ENCODE measurements at regions of chr2 and their contacts with region 1.

Region 1: GRCh38 chr2:8303322-8303832 is 378.5 kb upstream of the ID2 start:
- DNase-seq: peak; percentile 94
- H3K4me3 Mint-ChIP-seq: peak overlapping the region; percentile 71
- H3K27ac Mint-ChIP-seq: peak overlapping the region; percentile 83
- H3K4me1 Mint-ChIP-seq: peaks cover 72% of the 10 kb centered on the region
- H3K27me3 Mint-ChIP-seq: no peaks in the 10 kb centered on the region

Region 2: DNA sequence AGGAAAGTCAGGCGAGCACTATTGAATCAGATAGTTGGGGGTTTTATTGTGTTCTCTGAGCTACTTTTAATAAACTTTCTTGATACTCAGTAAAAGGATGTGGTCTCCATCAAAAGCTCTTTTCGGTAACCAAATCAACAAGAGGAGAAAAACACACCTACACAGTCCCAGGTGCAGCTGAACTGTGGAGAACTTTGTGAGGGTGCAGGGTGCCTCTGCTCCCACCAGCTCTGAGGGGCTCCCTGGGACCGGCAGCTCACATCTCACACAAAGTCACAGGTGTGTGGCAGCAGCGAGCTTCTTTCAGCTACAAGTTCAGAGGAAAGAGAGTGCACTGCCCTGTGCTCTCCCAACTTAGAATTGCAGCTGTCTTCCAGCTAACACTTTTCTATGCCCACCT is 735.7 kb before region 1 on chr2:
- intact Hi-C with region 1: loop called (anchors 5 kb)
- DNase-seq: peak; percentile 89
- H3K4me3 Mint-ChIP-seq: peak overlapping the region; percentile 65
- H3K27ac Mint-ChIP-seq: peak overlapping the region; percentile 97
- H3K4me1 Mint-ChIP-seq: peaks cover 58% of the 10 kb centered on the region
- H3K27me3 Mint-ChIP-seq: no peaks in the 10 kb centered on the region

Region 3: GRCh38 chr2:8049851-8050571 is 253.4 kb before region 1 on chr2:
- intact Hi-C with region 1: loop called (anchors 2 kb)
- DNase-seq: peak; percentile 81
- H3K4me3 Mint-ChIP-seq: peak overlapping the region; percentile 7
- H3K27ac Mint-ChIP-seq: peak overlapping the region; percentile 84
- H3K4me1 Mint-ChIP-seq: peaks cover 23% of the 10 kb centered on the region
- H3K27me3 Mint-ChIP-seq: no peaks in the 10 kb centered on the region

Region 4: GRCh38 chr2:8234757-8235374 is 68.5 kb before region 1 on chr2:
- intact Hi-C with region 1: loop called (anchors 1 kb)
- DNase-seq: no peak
- H3K4me3 Mint-ChIP-seq: no peak overlapping the region
- H3K27ac Mint-ChIP-seq: no peak overlapping the region
- H3K4me1 Mint-ChIP-seq: peaks cover 22% of the 10 kb centered on the region
- H3K27me3 Mint-ChIP-seq: peaks cover 1% of the 10 kb centered on the region

Region 5: DNA sequence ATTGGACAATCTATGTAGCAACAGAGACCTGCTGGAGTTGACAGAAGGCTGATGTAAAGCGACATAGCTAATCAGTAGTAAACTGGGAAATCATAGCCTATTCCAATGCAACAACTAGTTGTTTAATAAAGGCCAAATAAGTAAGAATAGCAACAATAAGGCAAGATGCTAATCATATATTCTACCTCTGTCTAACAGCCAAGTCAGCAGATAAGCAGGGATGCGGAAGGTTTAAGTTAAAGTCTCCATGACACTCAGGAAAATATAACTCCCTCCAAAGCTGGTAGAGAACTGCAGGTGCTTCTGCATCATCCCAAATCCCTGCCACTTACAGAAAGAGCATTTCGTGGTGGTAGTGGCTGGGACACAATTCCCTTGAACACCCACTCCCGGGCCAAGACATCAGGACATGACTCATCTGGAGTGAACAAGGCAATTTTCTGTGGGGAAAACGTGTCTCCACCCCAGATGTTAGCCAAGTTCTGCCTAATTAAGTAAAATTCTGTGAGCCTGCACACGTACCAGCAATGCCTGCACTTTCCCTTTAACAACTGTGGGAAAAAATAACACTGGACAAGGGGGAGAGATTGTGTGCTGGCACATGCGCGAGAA is 35.1 kb before region 1 on chr2:
- intact Hi-C with region 1: no loop called
- DNase-seq: no peak
- H3K4me3 Mint-ChIP-seq: no peak overlapping the region
- H3K27ac Mint-ChIP-seq: no peak overlapping the region
- H3K4me1 Mint-ChIP-seq: peaks cover 8% of the 10 kb centered on the region
- H3K27me3 Mint-ChIP-seq: no peaks in the 10 kb centered on the region

Region 6: GRCh38 chr2:8477552-8478470 is 174.4 kb after region 1 on chr2:
- intact Hi-C with region 1: loop called (anchors 5 kb)
- DNase-seq: peak; percentile 76
- H3K4me3 Mint-ChIP-seq: peak overlapping the region; percentile 53
- H3K27ac Mint-ChIP-seq: peak overlapping the region; percentile 84
- H3K4me1 Mint-ChIP-seq: peaks cover 84% of the 10 kb centered on the region
- H3K27me3 Mint-ChIP-seq: no peaks in the 10 kb centered on the region

Measured in activated CD4-positive, alpha-beta T cell treated with anti-CD3 and anti-CD28 coated beads, Interleukin-2, amount 10 ng/mL, durations not matched to agents 24 days and 14 days (primary cell).